ENCODE measurements at regions of chr19 and their contacts with region 1.

Region 1: DNA sequence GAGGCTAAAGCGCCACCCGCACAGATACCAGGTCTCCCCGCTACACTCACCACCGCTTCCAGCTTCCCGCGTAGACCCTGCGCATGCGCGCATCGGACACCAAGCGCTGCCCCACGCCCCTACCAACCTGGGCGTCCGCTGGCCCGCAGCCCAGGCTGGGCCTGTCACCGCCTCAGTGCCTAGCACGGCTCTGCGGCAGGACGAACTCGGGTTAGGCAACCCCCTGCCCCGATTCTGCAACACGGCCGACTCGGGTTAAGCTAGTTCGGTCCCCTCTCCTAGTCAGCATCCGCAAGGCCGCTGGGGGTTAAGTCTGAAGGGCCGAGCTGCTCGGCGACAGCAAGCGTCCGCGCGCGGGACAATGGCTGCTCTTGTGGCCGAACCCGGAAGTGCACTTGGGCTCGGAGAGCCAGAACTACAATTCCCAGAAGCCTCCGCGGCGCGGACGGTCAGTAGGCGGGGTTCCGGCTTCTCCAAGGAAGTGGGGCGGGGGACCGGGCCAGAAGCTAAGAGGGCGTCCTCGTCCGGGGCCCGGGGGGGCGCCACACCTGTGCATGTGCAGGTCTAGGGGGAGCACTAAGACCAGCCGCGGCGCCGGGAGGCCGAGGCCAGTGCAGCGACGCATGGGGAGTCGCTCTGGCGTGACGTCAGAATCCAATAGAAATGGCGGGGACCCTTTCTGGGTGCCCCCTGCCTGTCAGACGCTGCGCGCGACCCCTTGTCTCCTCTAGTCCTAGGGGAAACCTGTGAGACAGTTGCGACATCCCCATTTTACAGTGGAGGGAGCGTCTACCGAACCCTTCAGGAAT is at the start of gene ZNF180:
- DNase-seq: peak; percentile 97
- ATAC-seq: peak; percentile 88
- H3K4me3 Mint-ChIP-seq: peak within 1 kb of the TSS; percentile 91
- H3K27ac Mint-ChIP-seq: peak within 1 kb of the TSS; percentile 94
- H3K4me1 Mint-ChIP-seq: peaks cover 28% of the 10 kb centered on the region
- H3K27me3 Mint-ChIP-seq: peaks cover 5% of the 10 kb centered on the region
- total RNA-seq, gene ZNF180: 5.5 to 7.7 TPM

Region 2: GRCh38 chr19:44002566-44003460 is 497.5 kb before region 1 on chr19 and contains the start of gene ZNF230:
- CTCF ChIA-PET with region 1: interaction called, 3 read pairs
- POLR2A ChIA-PET with region 1: no interaction called
- intact Hi-C with region 1: loop called in 1 of 2 experiments (anchors 1 kb)
- DNase-seq: peak; percentile 90
- ATAC-seq: peak; percentile 99
- H3K4me3 Mint-ChIP-seq: peak within 1 kb of the TSS; percentile 85
- H3K27ac Mint-ChIP-seq: peak within 1 kb of the TSS; percentile 98
- H3K4me1 Mint-ChIP-seq: peaks cover 16% of the 10 kb centered on the region
- H3K27me3 Mint-ChIP-seq: no peaks in the 10 kb centered on the region
- total RNA-seq, gene ZNF230: 3.0 to 3.8 TPM

Region 3: DNA sequence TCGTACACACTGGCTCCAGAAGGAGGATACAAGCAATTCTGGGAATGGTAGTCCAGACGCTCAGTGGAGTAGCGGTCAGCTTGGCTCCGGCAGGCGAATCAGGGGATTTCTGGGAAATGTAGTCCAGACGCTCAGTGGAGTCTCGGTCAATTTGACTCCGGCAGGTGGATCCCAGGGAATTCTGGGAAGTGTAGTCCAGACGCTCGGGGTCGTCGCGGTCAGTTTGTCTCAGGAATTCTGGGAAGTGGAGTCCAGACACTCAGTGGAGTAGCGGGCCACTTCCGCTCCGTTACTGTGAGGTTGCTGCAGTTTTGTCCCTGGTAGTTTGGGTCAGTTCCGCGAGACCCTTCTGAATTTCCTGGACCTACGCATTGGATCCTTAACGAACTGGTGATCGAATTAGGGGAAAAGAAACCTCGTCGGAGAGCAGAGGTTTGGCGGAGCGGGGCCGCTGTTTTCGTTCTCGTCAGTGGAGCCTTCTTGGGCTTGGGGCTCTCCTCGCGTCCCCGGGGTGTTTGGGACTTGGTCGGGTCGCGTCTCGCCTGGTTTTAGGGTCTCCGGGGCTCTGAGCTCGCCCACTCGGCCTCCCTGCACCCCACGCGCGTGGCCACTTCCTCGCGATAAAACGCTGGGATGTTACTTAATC is 387.1 kb before region 1 on chr19 and contains the start of gene ZNF225:
- CTCF ChIA-PET with region 1: no interaction called
- POLR2A ChIA-PET with region 1: no interaction called
- intact Hi-C with region 1: loop called in 1 of 2 experiments (anchors 1 kb)
- DNase-seq: peak; percentile 88
- ATAC-seq: peak; percentile 94
- H3K4me3 Mint-ChIP-seq: peak within 1 kb of the TSS; percentile 99
- H3K27ac Mint-ChIP-seq: peak within 1 kb of the TSS; percentile 93
- H3K4me1 Mint-ChIP-seq: peaks cover 19% of the 10 kb centered on the region
- H3K27me3 Mint-ChIP-seq: no peaks in the 10 kb centered on the region
- total RNA-seq, gene ZNF225: 2.6 to 3.1 TPM

Region 4: DNA sequence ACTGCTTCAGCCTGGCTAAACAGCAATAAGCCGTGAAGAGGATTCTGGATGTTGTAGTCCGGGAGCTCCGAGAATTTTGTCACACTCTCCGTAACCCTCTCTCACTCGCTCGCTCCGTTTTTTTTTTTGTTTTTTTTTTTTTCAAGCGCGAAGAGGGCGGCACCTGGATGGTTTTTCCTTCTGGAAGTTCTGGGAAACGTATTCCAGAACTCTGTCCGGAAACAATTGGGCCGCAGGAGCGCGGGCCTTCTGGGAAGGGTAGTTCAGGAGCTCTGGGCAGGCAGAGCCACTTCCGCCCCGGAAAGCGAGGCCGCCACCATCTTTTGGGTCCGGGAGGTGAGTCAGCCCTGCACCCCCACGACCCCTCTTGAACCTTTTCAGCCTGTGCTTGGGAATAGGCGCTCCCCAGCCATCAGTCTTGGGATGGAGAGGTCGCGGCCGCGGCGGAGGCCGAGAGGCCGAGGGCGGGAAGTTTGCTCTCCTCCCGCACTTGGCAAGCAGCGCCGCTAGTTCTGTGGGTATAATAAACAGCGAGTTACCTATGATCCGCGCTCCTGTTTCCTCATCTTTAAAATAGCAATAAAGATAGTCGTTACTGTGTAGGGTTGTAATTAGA is 288.0 kb before region 1 on chr19 and contains the start of gene ZNF227:
- CTCF ChIA-PET with region 1: no interaction called
- POLR2A ChIA-PET with region 1: no interaction called
- intact Hi-C with region 1: loop called in 1 of 2 experiments (anchors 1 kb)
- DNase-seq: peak; percentile 90
- ATAC-seq: peak; percentile 98
- H3K4me3 Mint-ChIP-seq: peak within 1 kb of the TSS; percentile 90
- H3K27ac Mint-ChIP-seq: peak within 1 kb of the TSS; percentile 92
- H3K4me1 Mint-ChIP-seq: peaks cover 22% of the 10 kb centered on the region
- H3K27me3 Mint-ChIP-seq: no peaks in the 10 kb centered on the region
- total RNA-seq, gene ZNF227: 19.4 to 20.6 TPM

Region 5: DNA sequence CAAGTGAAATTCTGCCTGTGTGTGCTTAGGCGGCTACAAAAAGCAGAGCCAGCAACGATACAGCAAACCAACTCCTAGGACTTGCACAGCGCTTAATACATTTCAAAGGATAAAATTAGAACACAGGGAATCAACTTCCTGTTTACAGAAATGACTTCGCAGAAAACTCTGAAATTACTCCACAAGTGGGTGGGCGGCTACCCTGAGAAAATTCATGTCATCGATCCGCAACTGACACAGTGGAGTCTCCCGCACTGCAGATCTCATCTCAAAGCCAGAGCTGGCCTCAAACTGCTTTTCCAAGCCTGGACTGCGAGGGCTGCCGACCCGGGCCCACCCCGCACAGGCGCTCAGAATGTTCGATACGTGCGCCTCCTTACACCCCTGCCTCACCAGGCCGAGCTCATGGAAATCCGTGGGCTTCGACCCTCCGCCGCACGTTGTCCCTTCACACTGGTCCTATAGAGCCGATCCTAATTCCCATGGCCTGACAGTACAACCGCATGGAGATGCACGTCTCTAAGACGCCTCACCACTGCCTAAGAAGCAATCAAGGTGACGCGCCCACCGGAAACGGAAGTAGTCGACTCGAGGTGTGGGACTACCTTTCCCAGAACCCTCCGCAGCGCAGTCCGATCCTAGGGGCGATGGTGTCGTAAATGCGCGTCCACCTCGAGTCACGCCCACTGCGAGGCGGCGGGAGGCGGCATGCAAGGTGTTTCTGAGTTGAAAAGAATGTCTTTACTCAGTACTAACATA is 52.3 kb before region 1 on chr19 and contains the start of gene ZNF229:
- CTCF ChIA-PET with region 1: no interaction called
- POLR2A ChIA-PET with region 1: no interaction called
- intact Hi-C with region 1: loop called (anchors 1 kb)
- DNase-seq: peak; percentile 91
- ATAC-seq: peak; percentile 98
- H3K4me3 Mint-ChIP-seq: peak within 1 kb of the TSS; percentile 81
- H3K27ac Mint-ChIP-seq: peak within 1 kb of the TSS; percentile 84
- H3K4me1 Mint-ChIP-seq: peaks cover 10% of the 10 kb centered on the region
- H3K27me3 Mint-ChIP-seq: peaks cover 2% of the 10 kb centered on the region
- total RNA-seq, gene ZNF229: 1.0 to 1.2 TPM

Region 6: GRCh38 chr19:44764975-44765948 is 264.9 kb after region 1 on chr19:
- CTCF ChIA-PET with region 1: no interaction called
- POLR2A ChIA-PET with region 1: no interaction called
- intact Hi-C with region 1: no loop called
- DNase-seq: no peak
- ATAC-seq: no peak
- H3K4me3 Mint-ChIP-seq: no peak overlapping the region
- H3K27ac Mint-ChIP-seq: no peak overlapping the region
- H3K4me1 Mint-ChIP-seq: peaks cover 40% of the 10 kb centered on the region
- H3K27me3 Mint-ChIP-seq: no peaks in the 10 kb centered on the region